GM13976 (cell line): ENCODE measurements at regions of chr11 and their contacts with region 1.

Region 1: DNA sequence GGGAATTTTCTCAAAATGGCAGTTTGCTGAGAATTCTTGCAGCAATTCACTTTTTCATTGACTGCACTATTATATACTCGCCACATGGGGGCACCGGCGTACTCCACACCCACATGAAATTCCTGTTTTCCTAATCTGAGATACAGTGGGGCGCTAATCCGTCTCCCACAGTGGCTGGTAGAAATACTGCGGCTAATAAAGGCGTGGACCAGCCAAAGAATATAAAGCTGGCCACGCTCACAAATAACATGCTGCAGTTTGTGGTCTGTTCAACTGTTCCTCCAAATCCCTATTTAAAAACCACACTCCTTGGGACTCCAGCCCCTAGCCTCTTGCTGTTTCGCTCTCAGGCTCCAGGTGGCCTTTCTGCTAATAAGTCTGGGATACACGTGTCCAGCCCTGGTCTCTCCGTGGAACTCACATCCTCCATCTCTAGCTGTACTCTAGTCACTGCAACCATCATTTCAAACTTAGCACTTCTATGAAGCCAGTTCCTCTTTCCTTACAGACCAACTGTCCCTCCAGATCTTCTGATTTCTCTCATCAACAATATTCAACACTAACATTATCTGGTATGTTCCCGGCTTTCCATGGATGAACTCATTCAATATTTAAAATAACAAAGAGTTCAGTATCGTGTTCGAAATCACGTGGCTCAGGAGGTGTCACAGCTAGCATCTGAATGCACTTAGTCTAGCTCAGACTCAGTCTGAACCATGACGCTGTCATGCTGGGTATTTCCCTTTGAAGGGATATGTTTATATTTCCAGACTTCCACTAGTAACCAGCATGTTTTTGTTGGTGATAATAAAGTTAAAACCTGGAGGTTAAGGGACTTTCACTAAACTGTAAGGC is 22.0 kb downstream of the TBRG1 start:
- DNase-seq: peak; percentile 48
- CTCF ChIP-seq: peak; percentile 70

Region 2: GRCh38 chr11:124470516-124471227 is 174.0 kb before region 1 on chr11:
- in situ Hi-C with region 1: no loop called
- DNase-seq: no peak
- CTCF ChIP-seq: no peak

Region 3: GRCh38 chr11:124855437-124855836 is 210.8 kb after region 1 on chr11:
- in situ Hi-C with region 1: loop called (anchors 10 kb)
- DNase-seq: no peak
- CTCF ChIP-seq: no peak